ENCODE measurements at regions of chr13 and their contacts with region 1.

Region 1: DNA sequence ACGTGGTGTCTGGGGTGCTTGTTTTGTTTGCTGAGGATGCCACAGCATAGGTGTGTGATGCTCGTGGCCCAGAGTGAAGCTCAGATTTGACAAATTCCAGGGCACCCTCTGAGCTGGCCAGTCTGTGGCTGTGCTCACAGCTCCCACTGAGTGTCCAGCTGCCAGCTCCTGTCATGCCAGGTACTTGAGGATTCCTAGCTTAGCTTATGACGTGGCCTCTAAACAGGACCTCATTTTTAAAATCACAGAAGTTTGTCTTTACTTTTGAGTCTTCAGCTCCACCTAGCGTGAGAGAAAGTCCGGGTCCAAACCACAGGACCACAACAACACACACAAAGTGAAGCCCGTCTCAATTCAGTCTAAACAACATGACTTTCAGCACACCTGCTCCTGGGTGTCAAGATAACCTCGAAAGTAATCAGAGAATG is 117.3 kb downstream of the RAB20 start:
- DNase-seq: no peak
- ATAC-seq: peak; percentile 64

Region 2: GRCh38 chr13:110216398-110217041 is 227.7 kb before region 1 on chr13:
- intact Hi-C with region 1: loop called (anchors 5 kb)
- DNase-seq: no peak
- ATAC-seq: peak; percentile 66

Region 3: GRCh38 chr13:110509971-110510786 is 65.9 kb after region 1 on chr13:
- intact Hi-C with region 1: no loop called
- DNase-seq: no peak
- ATAC-seq: peak; percentile 2

Region 4: GRCh38 chr13:111281751-111282311 is 837.6 kb after region 1 on chr13:
- intact Hi-C with region 1: no loop called
- DNase-seq: no peak
- ATAC-seq: peak; percentile 20

Measured in Right ventricle myocardium inferior (tissue), 1 donor.